IMR-90 (cell line): ENCODE measurements at regions of chr11 and their contacts with region 1.

Region 1: GRCh38 chr11:78325274-78325781 is 92.3 kb downstream of the GAB2 start:
- DNase-seq: no peak
- ATAC-seq: no peak
- H3K4me3 ChIP-seq: no peak overlapping the region
- H3K27ac ChIP-seq: no peak overlapping the region
- H3K4me1 ChIP-seq: no peaks in the 10 kb centered on the region
- H3K27me3 ChIP-seq: no peaks in the 10 kb centered on the region
- CTCF ChIP-seq: no peak
- POLR2A ChIP-seq: no peak
- RAD21 ChIP-seq: no peak

Region 2: DNA sequence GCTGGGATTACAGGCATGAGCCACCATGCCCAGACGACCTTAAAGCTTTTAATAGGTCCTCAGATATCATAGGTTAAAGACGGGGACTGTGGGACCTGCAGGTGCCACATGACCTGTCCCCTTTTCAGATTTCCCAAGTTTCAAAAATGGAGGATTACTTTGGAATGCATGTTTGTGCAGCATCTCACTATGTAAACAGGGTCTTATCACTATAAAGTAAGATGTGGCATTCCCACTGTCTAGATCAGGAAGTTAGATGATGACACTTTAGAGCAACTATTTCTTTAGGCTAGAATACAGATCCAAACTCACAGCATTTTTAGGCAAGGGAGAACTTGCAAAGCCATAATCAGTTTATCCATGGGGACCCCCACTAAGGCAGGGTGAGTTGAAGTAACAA is 43.8 kb before region 1 on chr11:
- CTCF ChIA-PET with region 1: no interaction called
- POLR2A ChIA-PET with region 1: no interaction called
- dilution Hi-C with region 1: no loop called
- in situ Hi-C with region 1: no loop called
- intact Hi-C with region 1: loop called (anchors 5 kb)
- DNase-seq: peak; percentile 23
- ATAC-seq: peak; percentile 49
- H3K4me3 ChIP-seq: no peak overlapping the region
- H3K27ac ChIP-seq: no peak overlapping the region
- H3K4me1 ChIP-seq: no peaks in the 10 kb centered on the region
- H3K27me3 ChIP-seq: no peaks in the 10 kb centered on the region
- CTCF ChIP-seq: no peak
- POLR2A ChIP-seq: no peak
- RAD21 ChIP-seq: no peak